Naive thymus-derived CD4-positive, alpha-beta T cell (primary cell): ENCODE measurements at regions of chr4 and their contacts with region 1.

Region 1: DNA sequence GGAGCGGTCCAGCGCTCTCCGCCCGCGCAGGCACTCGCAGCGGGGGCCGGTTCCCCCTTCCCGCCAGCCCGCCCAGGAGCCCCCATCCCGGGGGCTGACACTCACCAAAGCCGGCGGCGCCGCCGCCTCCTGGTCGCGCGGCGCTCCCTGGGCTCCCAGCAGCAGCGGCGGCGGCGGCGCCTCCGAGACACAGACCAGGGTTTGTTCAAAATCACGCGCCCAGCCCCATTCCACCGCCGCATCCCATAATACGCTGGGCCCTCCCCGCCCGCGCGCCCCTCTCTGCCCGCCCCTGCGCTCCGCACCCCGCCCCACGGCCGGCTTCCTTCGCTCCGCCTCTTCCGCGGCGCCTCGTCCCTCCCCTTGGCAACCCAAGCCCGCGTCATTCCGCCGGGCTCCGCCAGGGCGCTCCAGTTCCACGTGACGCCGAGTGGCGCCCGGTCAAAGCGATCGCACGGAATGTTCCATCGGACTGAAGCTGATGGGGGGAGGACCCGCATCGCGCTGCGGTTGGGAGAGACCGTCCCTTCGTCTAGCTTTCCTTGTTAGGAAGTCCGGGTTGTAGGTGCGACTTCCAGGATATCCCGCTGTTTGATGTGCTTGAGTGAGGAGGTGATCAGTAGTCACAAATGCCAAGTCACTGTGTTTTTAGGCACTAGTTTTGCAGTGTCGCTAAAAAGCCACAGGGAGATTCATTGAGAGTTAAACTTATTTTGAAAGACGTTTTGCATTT is 2.2 kb upstream of the LIN54 start:
- DNase-seq: peak; percentile 93 to 99 (median 97)
- ATAC-seq: peak; percentile 94
- H3K4me3 ChIP-seq: peak overlapping the region; percentile 69
- H3K4me3 Mint-ChIP-seq: peak overlapping the region; percentile 89 to 98 (median 94)
- H3K27ac ChIP-seq: peak overlapping the region; percentile 73
- H3K27ac Mint-ChIP-seq: peak overlapping the region; percentile 84 to 98 (median 93)
- H3K4me1 ChIP-seq: peaks cover 15 to 22% of the 10 kb centered on the region in 2 donors
- H3K4me1 Mint-ChIP-seq: peaks cover 32 to 54% (median 46%) of the 10 kb centered on the region in 7 donors
- H3K27me3 ChIP-seq: no peaks in the 10 kb centered on the region
- H3K27me3 Mint-ChIP-seq: no peaks in the 10 kb centered on the region

Region 2: DNA sequence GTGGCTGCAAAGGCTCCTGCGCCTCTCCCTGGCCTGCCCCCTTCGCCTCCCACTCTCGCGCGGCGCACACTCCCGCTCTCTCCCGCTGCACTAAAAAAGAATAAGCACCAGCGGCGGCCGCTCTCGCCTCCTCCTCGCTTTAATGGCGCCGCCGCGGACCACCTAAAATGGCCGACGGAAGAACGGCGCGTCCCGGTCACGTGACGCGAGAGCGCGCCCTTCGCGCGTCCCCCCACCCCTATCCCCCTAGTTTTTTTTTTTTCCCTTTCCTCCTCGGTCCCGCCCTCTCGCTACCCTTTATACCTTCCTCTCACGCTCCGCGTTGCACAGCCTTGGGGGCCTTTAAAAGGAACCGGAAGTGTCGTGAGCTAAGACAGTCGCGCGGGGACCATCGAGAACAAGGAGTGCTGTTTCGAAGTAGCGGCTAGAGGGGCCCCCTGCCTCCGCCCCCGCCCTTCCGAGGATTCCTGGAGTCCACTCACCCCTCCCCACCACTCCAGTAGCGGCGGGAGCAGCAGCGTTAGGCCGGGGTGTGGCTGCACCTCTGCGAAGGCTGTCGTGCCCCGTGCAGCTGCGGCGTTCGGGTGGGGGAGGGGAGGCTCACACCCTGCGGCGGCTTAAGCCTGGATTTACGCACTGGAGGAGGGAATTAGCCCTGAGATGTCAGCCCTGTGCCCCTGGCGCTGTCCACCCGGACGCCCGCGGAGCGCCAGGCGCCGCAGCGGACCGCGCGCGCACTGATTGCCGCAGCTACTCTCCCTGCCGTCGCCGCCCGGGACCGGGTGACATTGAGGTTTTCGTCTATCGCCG is 638.8 kb before region 1 on chr4 and contains the start of gene HNRNPD:
- CTCF ChIA-PET with region 1: no interaction called
- POLR2A ChIA-PET with region 1: no interaction called
- intact Hi-C with region 1: loop called (anchors 1 kb)
- DNase-seq: peak; percentile 79 to 96 (median 93)
- ATAC-seq: peak; percentile 93
- H3K4me3 ChIP-seq: peak within 1 kb of the TSS; percentile 94
- H3K4me3 Mint-ChIP-seq: peak within 1 kb of the TSS; percentile 91 to 100 (median 97)
- H3K27ac ChIP-seq: peak within 1 kb of the TSS; percentile 98
- H3K27ac Mint-ChIP-seq: peak within 1 kb of the TSS; percentile 95 to 100 (median 99)
- H3K4me1 ChIP-seq: peaks cover 28 to 31% of the 10 kb centered on the region in 2 donors
- H3K4me1 Mint-ChIP-seq: peaks cover 35 to 62% (median 54%) of the 10 kb centered on the region in 7 donors
- H3K27me3 ChIP-seq: no peaks in the 10 kb centered on the region
- H3K27me3 Mint-ChIP-seq: peaks cover 0 to 3% (median 0%) of the 10 kb centered on the region in 5 donors
- total RNA-seq, gene HNRNPD: 200 to 355 (median 238) TPM

Region 3: GRCh38 chr4:82865592-82865991 is 147.3 kb before region 1 on chr4:
- CTCF ChIA-PET with region 1: no interaction called
- POLR2A ChIA-PET with region 1: no interaction called
- intact Hi-C with region 1: loop called in 1 of 2 experiments (anchors 1 kb)
- DNase-seq: peak in 7 of 9 donors; percentile 20 to 53 (median 30)
- ATAC-seq: peak; percentile 70
- H3K4me3 ChIP-seq: no peak overlapping the region
- H3K4me3 Mint-ChIP-seq: peak overlapping the region in 9 of 10 donors; percentile 33 to 79 (median 63)
- H3K27ac ChIP-seq: peak overlapping the region; percentile 56
- H3K27ac Mint-ChIP-seq: peak overlapping the region; percentile 44 to 94 (median 86)
- H3K4me1 ChIP-seq: peaks cover 13 to 19% of the 10 kb centered on the region in 2 donors
- H3K4me1 Mint-ChIP-seq: peaks cover 19 to 43% (median 33%) of the 10 kb centered on the region in 7 donors
- H3K27me3 ChIP-seq: no peaks in the 10 kb centered on the region
- H3K27me3 Mint-ChIP-seq: no peaks in the 10 kb centered on the region

Region 4: DNA sequence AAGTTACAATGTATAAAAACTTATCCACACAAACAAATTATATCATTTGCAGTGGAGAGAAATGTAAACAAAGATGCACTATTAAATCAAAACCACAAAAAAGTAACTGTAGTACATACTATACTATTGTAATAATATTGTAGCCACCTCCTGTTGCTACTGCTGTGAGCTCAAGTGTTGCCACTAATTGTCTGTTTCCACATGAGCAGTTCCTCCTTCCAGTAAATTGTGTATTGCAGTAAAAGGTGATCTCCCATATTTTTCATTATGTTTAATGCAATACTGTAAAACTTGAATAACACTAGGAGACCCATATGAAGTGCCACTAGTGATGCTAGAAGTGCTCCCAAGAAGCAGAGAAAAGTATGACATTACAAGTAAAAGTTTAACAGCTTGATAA is 14.0 kb before region 1 on chr4:
- CTCF ChIA-PET with region 1: no interaction called
- POLR2A ChIA-PET with region 1: interaction called, 4 read pairs
- intact Hi-C with region 1: loop called in 1 of 2 experiments (anchors 2 kb)
- DNase-seq: no peak
- ATAC-seq: no peak
- H3K4me3 ChIP-seq: no peak overlapping the region
- H3K4me3 Mint-ChIP-seq: no peak overlapping the region
- H3K27ac ChIP-seq: no peak overlapping the region
- H3K27ac Mint-ChIP-seq: no peak overlapping the region
- H3K4me1 ChIP-seq: no peaks in the 10 kb centered on the region
- H3K4me1 Mint-ChIP-seq: peaks cover 18 to 39% (median 23%) of the 10 kb centered on the region in 7 donors
- H3K27me3 ChIP-seq: no peaks in the 10 kb centered on the region
- H3K27me3 Mint-ChIP-seq: no peaks in the 10 kb centered on the region

Region 5: GRCh38 chr4:83097018-83097417 is 84.2 kb after region 1 on chr4:
- CTCF ChIA-PET with region 1: no interaction called
- POLR2A ChIA-PET with region 1: no interaction called
- intact Hi-C with region 1: no loop called
- DNase-seq: no peak
- ATAC-seq: no peak
- H3K4me3 ChIP-seq: no peak overlapping the region
- H3K4me3 Mint-ChIP-seq: peak overlapping the region in 2 of 10 donors; percentile 7 to 33
- H3K27ac ChIP-seq: no peak overlapping the region
- H3K27ac Mint-ChIP-seq: peak overlapping the region in 7 of 9 donors; percentile 39 to 92 (median 73)
- H3K4me1 ChIP-seq: peaks cover 0 to 33% of the 10 kb centered on the region in 2 donors
- H3K4me1 Mint-ChIP-seq: peaks cover 37 to 87% (median 68%) of the 10 kb centered on the region in 7 donors
- H3K27me3 ChIP-seq: no peaks in the 10 kb centered on the region
- H3K27me3 Mint-ChIP-seq: no peaks in the 10 kb centered on the region

Region 6: DNA sequence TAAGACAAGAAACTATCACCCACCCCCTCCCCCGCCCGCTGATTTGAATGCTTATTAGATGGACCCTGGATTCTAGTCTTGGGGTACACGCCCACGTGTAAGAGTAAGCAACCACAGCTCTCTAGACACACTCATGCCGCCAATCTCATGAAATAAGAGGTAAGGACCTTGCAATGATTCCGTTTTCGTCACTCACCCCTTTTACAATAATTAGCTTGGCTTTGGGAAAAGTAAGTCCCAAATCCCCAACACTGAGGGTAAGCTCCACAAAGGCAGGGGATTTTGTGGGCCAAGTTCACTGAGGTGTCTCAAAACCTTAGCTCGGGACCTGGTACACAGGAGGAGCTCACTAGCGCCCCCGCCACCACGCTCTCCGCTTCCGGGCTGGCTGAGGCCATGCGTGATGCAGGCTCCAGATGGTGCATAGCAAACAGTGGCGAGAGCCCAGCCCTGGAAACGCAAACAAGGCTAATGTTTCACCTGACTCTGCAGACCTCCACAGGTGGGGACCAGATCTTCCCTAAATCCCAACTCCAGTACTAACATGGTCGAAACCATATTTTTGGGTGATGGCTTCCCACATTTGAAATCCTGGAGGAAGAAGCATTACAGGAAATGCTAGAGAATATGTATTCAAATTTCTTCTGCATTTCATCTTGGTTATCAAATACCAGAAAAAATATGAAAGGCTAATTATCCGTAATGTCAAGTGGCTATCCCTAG is 97.5 kb after region 1 on chr4:
- CTCF ChIA-PET with region 1: no interaction called
- POLR2A ChIA-PET with region 1: no interaction called
- intact Hi-C with region 1: loop called (anchors 1 to 2 kb)
- DNase-seq: peak; percentile 81 to 89 (median 87)
- ATAC-seq: peak; percentile 88
- H3K4me3 ChIP-seq: peak overlapping the region; percentile 82
- H3K4me3 Mint-ChIP-seq: peak overlapping the region; percentile 94 to 99 (median 98)
- H3K27ac ChIP-seq: peak overlapping the region; percentile 88
- H3K27ac Mint-ChIP-seq: peak overlapping the region; percentile 92 to 99 (median 98)
- H3K4me1 ChIP-seq: peaks cover 24 to 35% of the 10 kb centered on the region in 2 donors
- H3K4me1 Mint-ChIP-seq: peaks cover 26 to 60% (median 45%) of the 10 kb centered on the region in 7 donors
- H3K27me3 ChIP-seq: no peaks in the 10 kb centered on the region
- H3K27me3 Mint-ChIP-seq: no peaks in the 10 kb centered on the region

Region 7: DNA sequence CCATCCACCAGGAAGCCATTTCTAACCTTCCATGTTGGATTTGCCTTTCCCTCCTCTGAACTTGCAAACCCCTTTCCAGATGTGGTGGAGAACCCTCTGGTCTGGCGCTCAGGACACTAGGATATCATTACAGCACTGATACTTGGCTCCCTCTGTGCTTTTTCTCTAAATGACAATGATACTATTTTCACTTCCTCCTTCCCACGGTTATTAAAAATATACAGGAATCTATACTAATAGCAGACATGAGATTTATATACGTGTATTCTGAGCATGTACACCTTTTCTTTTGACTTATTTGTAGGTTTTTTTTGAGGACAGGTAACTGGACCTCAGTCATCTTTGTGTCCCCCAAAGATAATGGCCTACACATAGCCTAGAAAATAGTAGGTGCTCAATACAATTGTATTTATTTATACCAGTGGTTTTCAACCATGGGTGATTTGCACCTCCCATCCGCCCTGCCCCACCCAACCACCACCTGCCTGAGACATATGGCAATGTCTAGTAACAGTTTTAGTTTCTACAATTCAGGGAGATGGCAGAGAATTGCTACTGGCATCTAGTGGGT is 162.1 kb after region 1 on chr4:
- CTCF ChIA-PET with region 1: no interaction called
- POLR2A ChIA-PET with region 1: no interaction called
- intact Hi-C with region 1: no loop called
- DNase-seq: no peak
- ATAC-seq: no peak
- H3K4me3 ChIP-seq: no peak overlapping the region
- H3K4me3 Mint-ChIP-seq: no peak overlapping the region
- H3K27ac ChIP-seq: no peak overlapping the region
- H3K27ac Mint-ChIP-seq: no peak overlapping the region
- H3K4me1 ChIP-seq: no peaks in the 10 kb centered on the region
- H3K4me1 Mint-ChIP-seq: peaks cover 0 to 13% (median 0%) of the 10 kb centered on the region in 7 donors
- H3K27me3 ChIP-seq: no peaks in the 10 kb centered on the region
- H3K27me3 Mint-ChIP-seq: peaks cover 0 to 10% (median 0%) of the 10 kb centered on the region in 5 donors

Region 8: GRCh38 chr4:83484500-83485461 is 471.9 kb after region 1 on chr4 and contains the start of gene ABRAXAS1:
- CTCF ChIA-PET with region 1: no interaction called
- POLR2A ChIA-PET with region 1: no interaction called
- intact Hi-C with region 1: loop called (anchors 1 kb)
- DNase-seq: peak; percentile 91 to 97 (median 96)
- ATAC-seq: peak; percentile 98
- H3K4me3 ChIP-seq: peak within 1 kb of the TSS; percentile 93
- H3K4me3 Mint-ChIP-seq: peak within 1 kb of the TSS; percentile 92 to 99 (median 98)
- H3K27ac ChIP-seq: peak within 1 kb of the TSS; percentile 86
- H3K27ac Mint-ChIP-seq: peak within 1 kb of the TSS; percentile 93 to 99 (median 98)
- H3K4me1 ChIP-seq: peaks cover 4 to 11% of the 10 kb centered on the region in 2 donors
- H3K4me1 Mint-ChIP-seq: peaks cover 15 to 49% (median 36%) of the 10 kb centered on the region in 7 donors
- H3K27me3 ChIP-seq: no peaks in the 10 kb centered on the region
- H3K27me3 Mint-ChIP-seq: peaks cover 0 to under 1% (median 0%) of the 10 kb centered on the region in 5 donors
- total RNA-seq, gene ABRAXAS1: 13.9 to 47.6 (median 24.9) TPM